Dorsolateral prefrontal cortex (tissue), 120 donors: ENCODE measurements at regions of chr13 and their contacts with region 1.

Region 1: GRCh38 chr13:80012251-80012650 is 328.7 kb downstream of the SPRY2 start:
- DNase-seq: no peak
- H3K4me3 ChIP-seq: peak overlapping the region in 10 of 59 donors; percentile 29 to 56 (median 46)
- H3K27ac ChIP-seq: peak overlapping the region in 43 of 59 donors; percentile 15 to 92 (median 85)
- H3K27me3 ChIP-seq: no peaks in the 10 kb centered on the region
- CTCF ChIP-seq: no peak

Region 2: GRCh38 chr13:80132741-80133601 is 120.7 kb after region 1 on chr13:
- intact Hi-C with region 1: loop called (anchors 5 to 10 kb)
- DNase-seq: peak; percentile 25 to 86 (median 68)
- H3K4me3 ChIP-seq: peak overlapping the region in 58 of 59 donors; percentile 9 to 65 (median 44)
- H3K27ac ChIP-seq: peak overlapping the region; percentile 73 to 98 (median 95)
- H3K27me3 ChIP-seq: no peaks in the 10 kb centered on the region
- CTCF ChIP-seq: peak in 9 of 56 donors; percentile 4 to 24 (median 22)